MCF 10A (cell line): ENCODE measurements at regions of chr15 and their contacts with region 1.

Region 1: GRCh38 chr15:69160141-69160993 is at the start of gene GLCE:
- DNase-seq: peak; percentile 98
- H3K4me3 Mint-ChIP-seq: peak within 1 kb of the TSS; percentile 97
- H3K27ac Mint-ChIP-seq: peak within 1 kb of the TSS; percentile 96
- H3K4me1 Mint-ChIP-seq: peaks cover 26% of the 10 kb centered on the region
- H3K27me3 Mint-ChIP-seq: no peaks in the 10 kb centered on the region
- CTCF ChIP-seq: no peak
- total RNA-seq, gene GLCE: 7.5 and 8.3 TPM in 2 replicates

Region 2: DNA sequence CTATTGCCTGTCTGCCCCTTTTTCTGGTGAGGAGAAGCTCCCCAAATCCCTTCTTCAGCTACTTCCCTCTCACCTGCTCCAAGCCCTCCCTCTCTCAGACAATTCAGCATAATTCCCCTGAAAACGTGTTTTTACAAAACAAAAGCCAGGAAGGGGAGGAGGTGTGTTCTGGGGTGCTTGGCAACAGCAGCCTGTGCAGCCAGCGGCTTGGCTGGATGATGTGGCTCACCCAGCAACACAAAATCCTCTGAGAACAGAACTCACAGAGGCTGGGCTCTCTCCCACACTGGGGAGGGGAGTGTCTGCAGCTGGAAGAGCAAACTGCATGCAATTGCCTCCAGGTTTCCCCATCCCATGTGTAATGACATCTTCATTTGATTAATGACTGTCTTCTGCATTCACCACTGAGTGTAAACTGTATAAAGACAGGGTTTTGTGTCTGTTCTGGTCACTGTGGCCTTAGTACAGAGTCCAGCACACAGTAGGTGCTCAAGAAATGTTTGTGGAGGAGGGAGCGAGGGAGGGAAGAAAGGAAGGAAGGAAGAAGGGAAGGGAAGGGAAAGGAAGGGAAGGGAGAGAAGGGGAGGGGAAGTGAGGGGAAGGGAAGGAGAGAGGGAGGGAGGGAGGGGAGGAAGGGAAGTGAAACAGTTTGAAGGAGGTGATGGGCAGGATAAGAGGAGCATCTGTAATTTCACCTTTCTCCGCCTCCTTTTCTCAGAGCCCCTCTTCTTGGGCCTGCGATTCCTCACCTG is 70.0 kb before region 1 on chr15:
- CTCF ChIA-PET with region 1: no interaction called
- POLR2A ChIA-PET with region 1: interaction called, 28 read pairs
- intact Hi-C with region 1: loop called (anchors 5 kb)
- DNase-seq: peak; percentile 70
- H3K4me3 Mint-ChIP-seq: peak overlapping the region; percentile 4
- H3K27ac Mint-ChIP-seq: peak overlapping the region; percentile 53
- H3K4me1 Mint-ChIP-seq: peaks cover 67% of the 10 kb centered on the region
- H3K27me3 Mint-ChIP-seq: no peaks in the 10 kb centered on the region
- CTCF ChIP-seq: no peak

Region 3: GRCh38 chr15:69143695-69144436 is 16.5 kb before region 1 on chr15:
- CTCF ChIA-PET with region 1: interaction called, 4 read pairs
- POLR2A ChIA-PET with region 1: interaction called, 27 read pairs
- intact Hi-C with region 1: no loop called
- DNase-seq: peak; percentile 17
- H3K4me3 Mint-ChIP-seq: no peak overlapping the region
- H3K27ac Mint-ChIP-seq: no peak overlapping the region
- H3K4me1 Mint-ChIP-seq: peaks cover 11% of the 10 kb centered on the region
- H3K27me3 Mint-ChIP-seq: peaks cover 33% of the 10 kb centered on the region
- CTCF ChIP-seq: no peak

Region 4: DNA sequence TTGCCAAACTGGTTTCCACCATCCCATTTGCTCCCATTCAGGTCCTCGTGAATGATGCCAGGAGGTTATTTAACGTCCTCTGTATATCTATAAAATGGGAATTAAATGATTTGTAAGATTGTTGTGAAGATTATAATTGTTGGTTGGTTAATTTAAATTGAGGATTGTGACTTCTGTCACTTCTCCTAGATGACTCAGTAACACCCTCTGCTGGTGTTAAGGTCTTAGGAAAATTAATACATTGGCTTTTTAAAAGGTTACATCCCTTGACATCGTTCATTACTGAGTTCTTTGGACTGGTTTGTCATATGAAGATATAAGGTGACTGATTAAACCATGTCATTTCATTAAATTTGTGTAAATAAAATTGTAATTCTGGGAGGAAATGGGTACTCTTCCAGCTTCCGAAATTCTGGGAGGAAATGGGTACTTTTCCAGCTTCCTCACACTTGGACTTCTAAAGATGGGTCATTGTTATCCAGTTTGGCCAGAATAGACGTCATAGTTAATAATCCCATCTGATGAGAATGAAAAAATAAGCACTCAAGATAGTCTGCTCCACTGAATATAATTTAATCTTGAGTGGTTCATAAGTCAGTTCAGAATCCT is 105.1 kb after region 1 on chr15:
- CTCF ChIA-PET with region 1: interaction called, 3 read pairs
- POLR2A ChIA-PET with region 1: no interaction called
- intact Hi-C with region 1: loop called (anchors 5 kb)
- DNase-seq: peak; percentile 63
- H3K4me3 Mint-ChIP-seq: no peak overlapping the region
- H3K27ac Mint-ChIP-seq: no peak overlapping the region
- H3K4me1 Mint-ChIP-seq: no peaks in the 10 kb centered on the region
- H3K27me3 Mint-ChIP-seq: no peaks in the 10 kb centered on the region
- CTCF ChIP-seq: peak; percentile 65

Region 5: GRCh38 chr15:69489073-69489571 is 328.8 kb after region 1 on chr15:
- CTCF ChIA-PET with region 1: no interaction called
- POLR2A ChIA-PET with region 1: no interaction called
- intact Hi-C with region 1: no loop called
- DNase-seq: no peak
- H3K4me3 Mint-ChIP-seq: no peak overlapping the region
- H3K27ac Mint-ChIP-seq: no peak overlapping the region
- H3K4me1 Mint-ChIP-seq: peaks cover 14% of the 10 kb centered on the region
- H3K27me3 Mint-ChIP-seq: peaks cover 17% of the 10 kb centered on the region
- CTCF ChIP-seq: no peak